Activated B cell treated with CpG ODN at 0.5 μM for 24 hours (primary cell): ENCODE measurements at regions of chr12 and their contacts with region 1.

Region 1: DNA sequence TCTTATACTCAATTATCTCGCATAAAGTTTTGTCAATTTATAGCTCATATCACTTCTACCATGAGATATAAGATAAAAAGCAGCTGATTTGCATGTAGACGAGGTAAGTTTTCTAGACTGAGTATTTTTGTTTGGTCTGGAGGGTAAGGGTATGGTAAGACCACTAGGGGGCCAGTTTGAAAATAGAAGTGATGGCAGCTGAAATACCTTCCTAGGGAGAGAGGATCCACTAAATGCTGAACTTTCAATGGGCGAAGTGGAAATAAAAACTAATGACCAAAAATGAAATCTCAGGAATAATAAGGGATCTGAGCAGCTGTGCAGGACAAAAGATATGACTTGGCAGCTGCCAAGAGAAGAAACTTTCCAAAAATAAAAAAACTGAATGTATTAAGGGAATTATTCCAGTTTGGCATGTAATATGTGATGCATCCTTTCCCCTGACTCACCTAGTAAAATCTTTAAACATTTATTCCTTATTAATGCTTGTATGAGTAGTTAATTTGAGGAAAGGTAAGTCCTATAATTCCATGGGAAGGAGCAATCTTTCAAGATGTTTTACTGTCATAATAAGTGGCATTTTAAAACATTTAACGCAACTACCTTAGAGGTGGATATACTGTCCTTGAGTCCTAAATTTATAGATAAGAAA is 754.5 kb downstream of the C12orf50 start:
- DNase-seq: no peak
- ATAC-seq: no peak
- H3K4me3 Mint-ChIP-seq: no peak overlapping the region
- H3K27ac Mint-ChIP-seq: no peak overlapping the region
- H3K4me1 Mint-ChIP-seq: peaks cover 3% of the 10 kb centered on the region
- H3K27me3 Mint-ChIP-seq: no peaks in the 10 kb centered on the region
- CTCF ChIP-seq: no peak

Region 2: DNA sequence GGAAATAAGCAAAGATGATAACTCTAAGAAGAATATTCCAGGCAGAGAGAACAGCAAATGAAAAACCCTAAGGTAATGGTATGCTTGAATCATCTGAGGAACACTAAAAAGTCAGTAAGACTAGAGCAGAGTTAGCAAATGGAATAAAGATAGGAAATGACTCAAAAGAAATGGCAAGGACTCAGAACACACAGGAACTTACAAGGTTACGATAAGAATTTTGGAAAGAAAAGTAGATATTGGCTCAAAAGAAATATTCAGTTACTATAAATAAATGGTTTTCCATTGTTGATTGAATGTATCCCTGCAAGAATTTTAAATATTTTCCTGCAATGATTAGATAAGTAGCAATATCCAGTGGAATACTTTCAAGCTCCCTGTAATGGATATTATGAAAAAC is 48.6 kb after region 1 on chr12:
- CTCF ChIA-PET with region 1: no interaction called
- POLR2A ChIA-PET with region 1: no interaction called
- intact Hi-C with region 1: loop called (anchors 5 kb)
- DNase-seq: no peak
- ATAC-seq: no peak
- H3K4me3 Mint-ChIP-seq: no peak overlapping the region
- H3K27ac Mint-ChIP-seq: no peak overlapping the region
- H3K4me1 Mint-ChIP-seq: no peaks in the 10 kb centered on the region
- H3K27me3 Mint-ChIP-seq: no peaks in the 10 kb centered on the region
- CTCF ChIP-seq: no peak

Region 3: DNA sequence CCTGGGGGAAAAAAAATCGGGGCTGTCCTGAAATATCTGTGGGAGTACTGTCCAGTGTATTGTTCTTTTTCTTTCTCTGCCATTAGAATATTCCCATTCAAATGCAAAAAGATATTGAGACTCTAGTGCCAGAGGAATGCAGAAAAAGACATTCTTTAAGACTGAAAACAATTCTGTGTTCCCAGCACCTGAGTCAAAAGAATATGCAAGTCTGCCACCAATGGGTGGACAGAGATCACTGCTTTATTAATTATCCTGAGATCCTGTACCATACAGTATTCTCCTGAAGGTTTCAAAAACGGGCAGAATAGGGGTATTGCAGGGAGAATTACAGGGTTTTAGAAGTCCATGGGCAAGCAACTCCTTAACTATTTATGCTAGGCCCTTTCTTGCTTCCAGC is 392.7 kb after region 1 on chr12:
- CTCF ChIA-PET with region 1: no interaction called
- POLR2A ChIA-PET with region 1: no interaction called
- intact Hi-C with region 1: loop called (anchors 10 kb)
- DNase-seq: no peak
- ATAC-seq: no peak
- H3K4me3 Mint-ChIP-seq: no peak overlapping the region
- H3K27ac Mint-ChIP-seq: no peak overlapping the region
- H3K4me1 Mint-ChIP-seq: peaks cover 3% of the 10 kb centered on the region
- H3K27me3 Mint-ChIP-seq: no peaks in the 10 kb centered on the region
- CTCF ChIP-seq: no peak

Region 4: DNA sequence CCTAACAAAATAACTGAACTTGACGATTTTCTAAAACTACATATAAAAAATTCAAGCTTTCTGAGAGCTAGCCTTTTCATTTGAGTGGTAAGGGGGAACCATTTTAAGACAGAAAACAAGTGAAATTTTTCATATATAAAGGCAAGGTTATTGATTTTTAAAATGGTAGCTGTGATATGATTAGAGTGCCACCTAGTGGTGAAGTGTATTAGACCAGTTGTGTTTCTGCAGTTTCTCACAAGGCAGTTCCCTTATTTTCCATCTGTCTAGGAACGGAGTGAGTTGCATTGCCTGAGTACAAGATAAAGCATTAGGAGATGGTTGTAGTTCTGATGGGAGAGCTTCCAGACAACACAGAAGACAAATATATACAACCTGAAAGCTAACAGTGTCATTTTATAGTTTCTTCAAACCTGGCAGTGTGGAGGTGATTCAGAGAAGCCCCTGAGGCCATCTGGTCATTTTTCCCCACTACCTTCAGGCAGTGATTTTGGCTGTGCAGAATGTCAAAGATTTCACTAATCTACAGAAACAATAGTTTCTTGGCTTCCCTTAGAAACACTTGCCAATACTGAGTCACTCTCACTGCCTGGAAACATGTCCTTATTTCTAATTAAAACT is 573.6 kb after region 1 on chr12:
- CTCF ChIA-PET with region 1: interaction called, 3 read pairs
- POLR2A ChIA-PET with region 1: no interaction called
- intact Hi-C with region 1: loop called (anchors 1 kb)
- DNase-seq: no peak
- ATAC-seq: peak; percentile 40
- H3K4me3 Mint-ChIP-seq: no peak overlapping the region
- H3K27ac Mint-ChIP-seq: no peak overlapping the region
- H3K4me1 Mint-ChIP-seq: peaks cover 1% of the 10 kb centered on the region
- H3K27me3 Mint-ChIP-seq: peaks cover 2% of the 10 kb centered on the region
- CTCF ChIP-seq: peak; percentile 91